ENCODE measurements at regions of chr14 and their contacts with region 1.

Region 1: DNA sequence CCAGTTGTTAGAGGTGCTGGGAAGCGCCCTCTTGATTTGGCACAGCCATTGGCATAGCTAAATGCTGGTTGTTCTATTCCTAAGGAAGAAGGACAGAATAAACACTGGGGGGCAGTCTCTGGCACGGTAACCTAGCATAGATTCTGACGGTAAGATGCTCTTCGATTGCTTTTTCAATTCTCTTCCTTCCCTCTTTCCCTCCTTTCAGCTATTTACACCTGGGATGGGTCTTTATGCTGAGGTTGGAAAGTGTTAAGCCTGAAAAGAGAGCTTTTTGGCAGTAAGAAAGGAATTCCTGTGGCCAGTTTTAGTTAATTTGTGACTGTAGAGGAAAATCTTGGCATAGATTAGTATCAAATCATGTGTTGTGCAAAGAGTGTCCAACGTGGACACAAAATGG is 162.8 kb downstream of the SNAPC1 start:
- DNase-seq: no peak
- ATAC-seq: peak; percentile 79
- H3K4me3 Mint-ChIP-seq: no peak overlapping the region
- H3K27ac Mint-ChIP-seq: no peak overlapping the region
- H3K4me1 Mint-ChIP-seq: peaks cover 45% of the 10 kb centered on the region
- H3K27me3 Mint-ChIP-seq: peaks cover 4% of the 10 kb centered on the region
- CTCF ChIP-seq: no peak

Region 2: GRCh38 chr14:61653507-61653906 is 271.5 kb before region 1 on chr14:
- CTCF ChIA-PET with region 1: no interaction called
- POLR2A ChIA-PET with region 1: no interaction called
- DNase-seq: no peak
- ATAC-seq: no peak
- H3K4me3 Mint-ChIP-seq: no peak overlapping the region
- H3K27ac Mint-ChIP-seq: no peak overlapping the region
- H3K4me1 Mint-ChIP-seq: no peaks in the 10 kb centered on the region
- H3K27me3 Mint-ChIP-seq: no peaks in the 10 kb centered on the region
- CTCF ChIP-seq: no peak

Region 3: DNA sequence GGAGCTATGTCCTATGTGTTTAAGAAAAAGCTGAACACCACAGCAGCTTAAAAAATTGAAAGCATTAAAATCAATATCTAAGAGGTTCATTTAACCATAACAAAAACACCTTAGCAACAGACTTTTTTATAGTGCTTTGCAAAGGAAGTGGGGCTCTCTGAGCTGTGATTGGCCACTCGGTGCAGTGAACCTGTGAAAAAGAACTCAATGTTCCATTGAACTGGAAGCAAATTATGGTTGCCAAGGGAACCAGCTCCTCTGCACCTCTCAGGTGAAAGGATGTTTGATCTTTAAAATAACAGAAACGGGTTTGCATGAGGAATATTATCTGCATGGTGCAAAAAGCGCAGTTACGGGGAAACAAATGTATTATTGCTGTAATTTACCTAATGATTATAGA is 13.5 kb before region 1 on chr14:
- CTCF ChIA-PET with region 1: interaction called, 10 read pairs
- POLR2A ChIA-PET with region 1: no interaction called
- DNase-seq: no peak
- ATAC-seq: no peak
- H3K4me3 Mint-ChIP-seq: no peak overlapping the region
- H3K27ac Mint-ChIP-seq: no peak overlapping the region
- H3K4me1 Mint-ChIP-seq: no peaks in the 10 kb centered on the region
- H3K27me3 Mint-ChIP-seq: no peaks in the 10 kb centered on the region
- CTCF ChIP-seq: no peak

Region 4: GRCh38 chr14:62117010-62117750 is 192.1 kb after region 1 on chr14:
- CTCF ChIA-PET with region 1: interaction called, 44 read pairs
- POLR2A ChIA-PET with region 1: interaction called, 4 read pairs
- DNase-seq: peak; percentile 97
- ATAC-seq: peak; percentile 98
- H3K4me3 Mint-ChIP-seq: peak overlapping the region; percentile 78
- H3K27ac Mint-ChIP-seq: no peak overlapping the region
- H3K4me1 Mint-ChIP-seq: peaks cover 23% of the 10 kb centered on the region
- H3K27me3 Mint-ChIP-seq: peaks cover 61% of the 10 kb centered on the region
- CTCF ChIP-seq: no peak